Activated CD4-positive, alpha-beta memory T cell treated with anti-CD3 and anti-CD28 coated beads for 36 hours (primary cell): ENCODE measurements at regions of chr12 and their contacts with region 1.

Region 1: GRCh38 chr12:50038336-50038735 is 13.0 kb upstream of the RACGAP1 start:
- DNase-seq: no peak
- H3K4me3 Mint-ChIP-seq: no peak overlapping the region
- H3K27ac Mint-ChIP-seq: no peak overlapping the region
- H3K4me1 Mint-ChIP-seq: peaks cover 12% of the 10 kb centered on the region
- H3K27me3 Mint-ChIP-seq: peaks cover 2% of the 10 kb centered on the region

Region 2: GRCh38 chr12:49955899-49956662 is 82.3 kb before region 1 on chr12:
- CTCF ChIA-PET with region 1: no interaction called
- POLR2A ChIA-PET with region 1: no interaction called
- intact Hi-C with region 1: no loop called
- DNase-seq: no peak
- H3K4me3 Mint-ChIP-seq: no peak overlapping the region
- H3K27ac Mint-ChIP-seq: no peak overlapping the region
- H3K4me1 Mint-ChIP-seq: peaks cover 8% of the 10 kb centered on the region
- H3K27me3 Mint-ChIP-seq: peaks cover 59% of the 10 kb centered on the region

Region 3: DNA sequence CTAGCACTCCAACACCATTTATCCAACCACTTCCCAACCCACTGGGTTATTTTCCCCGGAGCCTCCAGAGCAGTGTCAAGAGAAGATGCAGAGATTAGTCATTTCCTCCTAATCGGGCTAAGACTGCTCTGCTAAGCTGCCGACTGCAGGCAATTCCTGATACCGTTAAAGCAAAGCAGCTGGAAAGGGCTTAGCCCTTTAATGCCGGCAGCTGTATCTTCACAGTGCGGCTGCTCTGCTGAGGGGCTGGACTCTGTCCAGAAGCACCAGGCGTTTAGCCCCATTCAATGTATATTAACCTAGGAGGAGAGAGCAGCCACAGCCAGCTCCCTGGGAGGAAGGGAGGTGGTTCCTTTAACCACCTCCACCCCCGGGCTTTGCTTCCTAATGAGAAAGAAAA is 54.4 kb before region 1 on chr12:
- CTCF ChIA-PET with region 1: interaction called, 15 read pairs
- POLR2A ChIA-PET with region 1: no interaction called
- intact Hi-C with region 1: no loop called
- DNase-seq: no peak
- H3K4me3 Mint-ChIP-seq: no peak overlapping the region
- H3K27ac Mint-ChIP-seq: no peak overlapping the region
- H3K4me1 Mint-ChIP-seq: peaks cover 4% of the 10 kb centered on the region
- H3K27me3 Mint-ChIP-seq: no peaks in the 10 kb centered on the region

Region 4: DNA sequence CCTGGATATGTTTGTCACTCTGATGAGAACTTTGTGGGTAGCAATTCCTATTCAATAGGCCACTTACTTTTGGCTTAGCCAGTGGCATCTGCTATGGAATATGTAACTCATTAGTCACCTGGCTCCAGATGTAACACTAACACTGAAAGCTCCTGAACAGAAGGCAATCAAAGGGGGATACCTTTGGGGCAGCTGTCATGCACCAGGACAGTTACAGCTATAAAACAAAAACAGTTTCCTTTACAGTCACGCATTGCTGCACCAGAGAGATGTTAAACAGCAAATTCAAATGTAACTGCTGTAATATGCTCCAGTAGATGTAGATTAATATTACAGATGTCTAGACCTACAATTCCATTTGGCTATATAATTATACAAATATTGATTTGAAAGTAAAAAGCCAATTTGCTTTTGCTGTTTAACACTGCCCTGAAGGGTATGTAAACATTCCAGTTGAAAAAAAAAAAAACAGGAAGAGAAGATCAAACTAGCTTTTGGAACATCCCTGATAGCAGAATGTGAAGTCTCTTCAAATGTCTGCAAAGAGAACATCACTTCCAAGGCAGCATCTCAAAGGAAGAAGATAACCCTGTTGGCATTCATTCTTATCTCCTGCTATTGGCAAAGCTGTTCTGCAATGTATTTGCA is 31.4 kb before region 1 on chr12:
- CTCF ChIA-PET with region 1: interaction called, 12 read pairs
- POLR2A ChIA-PET with region 1: no interaction called
- intact Hi-C with region 1: no loop called
- DNase-seq: no peak
- H3K4me3 Mint-ChIP-seq: no peak overlapping the region
- H3K27ac Mint-ChIP-seq: no peak overlapping the region
- H3K4me1 Mint-ChIP-seq: peaks cover 11% of the 10 kb centered on the region
- H3K27me3 Mint-ChIP-seq: no peaks in the 10 kb centered on the region

Region 5: GRCh38 chr12:50016501-50017475 is 21.5 kb before region 1 on chr12:
- CTCF ChIA-PET with region 1: interaction called, 16 read pairs
- POLR2A ChIA-PET with region 1: interaction called, 3 read pairs
- intact Hi-C with region 1: no loop called
- DNase-seq: no peak
- H3K4me3 Mint-ChIP-seq: no peak overlapping the region
- H3K27ac Mint-ChIP-seq: no peak overlapping the region
- H3K4me1 Mint-ChIP-seq: peaks cover 16% of the 10 kb centered on the region
- H3K27me3 Mint-ChIP-seq: no peaks in the 10 kb centered on the region

Region 6: DNA sequence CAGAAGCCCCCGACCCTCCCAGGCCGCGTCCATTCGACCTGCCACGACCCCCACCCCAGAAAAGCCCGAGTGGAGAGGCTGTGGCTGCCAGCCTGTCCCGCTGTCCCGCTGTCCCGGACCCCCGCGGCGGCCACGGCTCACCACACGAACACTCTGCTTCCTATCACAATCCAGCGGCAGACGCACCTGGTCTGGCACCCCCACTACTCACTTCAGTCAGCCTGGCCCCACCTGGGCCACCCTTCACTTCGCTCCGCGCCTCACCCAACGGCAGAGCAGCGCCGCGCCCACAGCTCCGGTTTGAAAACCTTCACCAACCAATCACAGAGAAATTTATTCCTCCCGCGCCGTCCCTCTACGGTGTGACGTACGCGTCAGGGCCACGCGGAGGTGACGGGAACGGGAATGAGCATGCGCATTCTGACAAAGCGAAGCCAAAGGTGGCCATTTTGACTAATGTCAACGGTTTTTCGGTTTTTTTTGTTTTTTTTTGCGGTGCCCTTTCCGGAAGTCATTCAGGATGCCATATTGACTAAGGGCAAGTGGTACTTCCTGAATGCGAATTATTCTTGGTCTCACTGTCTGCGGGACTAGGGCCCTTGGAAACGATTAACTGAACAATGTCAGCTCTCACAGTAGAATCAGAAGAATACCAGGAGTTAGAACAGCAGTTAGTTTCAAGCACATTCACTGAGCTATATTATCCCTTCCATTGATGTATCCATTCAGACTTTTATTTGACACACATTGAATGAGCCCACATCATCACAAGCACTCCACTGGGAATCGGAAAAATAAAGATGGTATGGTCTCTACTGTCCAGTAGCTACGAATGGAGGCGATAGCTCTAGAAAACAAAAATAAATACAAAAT is 12.9 kb before region 1 on chr12 and contains the start of gene RACGAP1:
- CTCF ChIA-PET with region 1: interaction called, 17 read pairs
- POLR2A ChIA-PET with region 1: interaction called, 3 read pairs
- intact Hi-C with region 1: no loop called
- DNase-seq: peak; percentile 98
- H3K4me3 Mint-ChIP-seq: peak within 1 kb of the TSS; percentile 94
- H3K27ac Mint-ChIP-seq: peak within 1 kb of the TSS; percentile 91
- H3K4me1 Mint-ChIP-seq: peaks cover 14% of the 10 kb centered on the region
- H3K27me3 Mint-ChIP-seq: peaks cover 2% of the 10 kb centered on the region
- total RNA-seq, gene RACGAP1: 145 to 152 TPM

Region 7: DNA sequence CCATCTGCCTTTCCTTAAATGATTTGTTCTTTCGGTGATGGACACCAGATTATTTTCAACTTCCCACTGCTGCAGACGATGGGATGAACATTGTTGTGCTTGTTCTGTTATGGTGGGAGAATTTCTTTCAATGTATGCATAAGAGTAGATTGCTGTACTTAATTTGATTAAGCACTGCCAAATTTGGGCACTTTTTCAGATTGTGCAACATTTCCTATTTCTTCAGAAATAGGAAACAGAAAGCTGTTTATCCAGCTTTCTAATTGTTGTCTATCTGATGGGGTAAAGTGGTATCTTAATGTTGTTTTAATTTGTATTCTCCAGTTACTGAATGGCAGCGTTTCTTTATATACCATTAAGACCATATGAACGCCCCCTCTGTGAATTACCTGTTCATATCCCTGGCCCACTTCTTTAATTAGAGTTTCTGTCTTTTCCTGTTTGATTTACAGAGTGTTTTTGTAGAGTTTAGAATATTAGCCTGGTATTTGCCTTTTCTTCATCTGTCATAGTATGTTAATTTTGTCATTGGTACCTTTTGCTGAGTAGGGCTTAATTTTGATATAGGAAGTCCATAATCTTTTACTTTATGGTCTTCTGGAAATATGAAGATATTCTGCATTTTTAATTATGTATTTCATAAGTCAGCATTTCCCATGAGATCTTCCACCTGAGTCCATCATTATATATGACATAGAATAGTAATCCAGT is 526.1 kb after region 1 on chr12:
- CTCF ChIA-PET with region 1: no interaction called
- POLR2A ChIA-PET with region 1: no interaction called
- intact Hi-C with region 1: no loop called
- DNase-seq: no peak
- H3K4me3 Mint-ChIP-seq: no peak overlapping the region
- H3K27ac Mint-ChIP-seq: no peak overlapping the region
- H3K4me1 Mint-ChIP-seq: peaks cover 47% of the 10 kb centered on the region
- H3K27me3 Mint-ChIP-seq: no peaks in the 10 kb centered on the region